AG04449 (cell line): ENCODE measurements at regions of chr10 and their contacts with region 1.

Region 1: DNA sequence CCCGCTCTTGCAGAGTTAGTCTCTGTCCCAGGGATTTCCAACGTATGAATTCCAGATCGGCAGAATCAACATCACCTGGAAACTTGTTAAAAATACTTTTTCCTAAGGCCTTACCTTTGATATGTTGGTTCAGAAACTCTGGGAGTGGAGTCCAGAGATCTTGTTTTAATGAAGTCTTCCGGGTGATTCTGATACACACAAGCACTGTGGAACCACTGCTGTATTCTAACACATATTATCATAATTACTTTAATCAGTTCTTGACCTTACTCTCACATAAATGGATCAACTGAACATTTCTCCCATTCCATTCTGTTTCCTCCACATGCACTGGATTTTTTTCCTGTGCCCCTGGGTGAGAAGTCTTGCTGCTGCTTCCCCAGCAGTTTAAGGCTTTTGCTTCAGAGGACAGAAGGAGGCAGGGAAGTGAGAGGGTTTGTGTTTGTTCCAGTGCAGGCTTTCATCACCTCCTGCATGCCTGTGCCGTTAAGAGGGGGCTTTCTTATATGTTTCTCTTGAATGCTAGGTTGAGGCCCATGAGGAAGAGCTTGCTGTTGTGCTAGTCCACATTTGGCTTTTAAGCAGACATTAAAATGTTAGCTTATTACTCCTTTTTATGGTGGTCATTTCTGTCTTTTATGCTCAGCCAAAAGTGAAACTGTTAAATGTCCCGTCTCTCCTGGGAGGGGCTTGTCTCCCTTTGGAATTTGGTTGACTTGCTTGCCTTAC is 32.4 kb downstream of the CCSER2 start:
- DNase-seq: no peak
- H3K4me3 ChIP-seq: peak overlapping the region; percentile 37
- CTCF ChIP-seq: no peak

Region 2: DNA sequence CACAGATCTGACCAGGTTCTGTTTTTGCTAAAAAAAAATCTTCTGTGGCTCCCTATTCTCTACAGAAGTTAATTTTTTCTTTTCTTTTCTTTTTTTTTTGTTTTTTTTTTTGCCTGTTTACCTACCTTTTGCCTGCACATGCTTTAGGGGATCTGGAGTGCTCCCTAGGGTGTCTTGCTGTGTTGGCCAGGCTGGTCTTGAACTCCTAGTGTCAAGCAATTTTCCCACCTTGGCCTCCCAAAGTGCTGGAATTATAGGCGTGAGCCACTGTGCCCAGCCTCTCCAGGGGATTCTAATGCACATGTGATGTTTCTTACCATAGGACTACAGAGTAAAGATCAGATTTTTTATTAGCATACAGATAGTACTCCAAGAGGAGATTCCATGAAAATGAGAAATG is 21.8 kb before region 1 on chr10:
- CTCF ChIA-PET with region 1: no interaction called
- POLR2A ChIA-PET with region 1: no interaction called
- DNase-seq: no peak
- H3K4me3 ChIP-seq: no peak overlapping the region
- CTCF ChIP-seq: no peak

Region 3: GRCh38 chr10:84375011-84375410 is 14.2 kb after region 1 on chr10:
- CTCF ChIA-PET with region 1: interaction called, 61 read pairs
- POLR2A ChIA-PET with region 1: no interaction called
- DNase-seq: peak; percentile 19
- H3K4me3 ChIP-seq: no peak overlapping the region
- CTCF ChIP-seq: peak; percentile 65